ENCODE measurements at regions of chr2 and their contacts with region 1.

Region 1: GRCh38 chr2:131366643-131367042 is 2.7 kb upstream of the RAB6D start:
- DNase-seq: no peak
- ATAC-seq: no peak
- H3K4me3 ChIP-seq: no peak overlapping the region
- H3K27ac ChIP-seq: no peak overlapping the region
- H3K4me1 ChIP-seq: no peaks in the 10 kb centered on the region
- H3K27me3 ChIP-seq: peaks cover 6% of the 10 kb centered on the region
- CTCF ChIP-seq: no peak
- POLR2A ChIP-seq: no peak
- RAD21 ChIP-seq: no peak

Region 2: GRCh38 chr2:130288461-130289403 is 1077.9 kb before region 1 on chr2:
- CTCF ChIA-PET with region 1: no interaction called
- POLR2A ChIA-PET with region 1: no interaction called
- dilution Hi-C with region 1: loop called (anchors 25 kb)
- in situ Hi-C with region 1: no loop called
- intact Hi-C with region 1: no loop called
- DNase-seq: no peak
- ATAC-seq: no peak
- H3K4me3 ChIP-seq: no peak overlapping the region
- H3K27ac ChIP-seq: no peak overlapping the region
- H3K4me1 ChIP-seq: no peaks in the 10 kb centered on the region
- H3K27me3 ChIP-seq: no peaks in the 10 kb centered on the region
- CTCF ChIP-seq: no peak
- POLR2A ChIP-seq: no peak
- RAD21 ChIP-seq: no peak

Region 3: GRCh38 chr2:131055169-131056065 is 311.2 kb before region 1 on chr2:
- CTCF ChIA-PET with region 1: no interaction called
- POLR2A ChIA-PET with region 1: no interaction called
- dilution Hi-C with region 1: no loop called
- in situ Hi-C with region 1: no loop called
- intact Hi-C with region 1: no loop called
- DNase-seq: peak; percentile 75
- ATAC-seq: peak; percentile 85
- H3K4me3 ChIP-seq: no peak overlapping the region
- H3K27ac ChIP-seq: peak overlapping the region; percentile 75
- H3K4me1 ChIP-seq: peaks cover 19% of the 10 kb centered on the region
- H3K27me3 ChIP-seq: no peaks in the 10 kb centered on the region
- CTCF ChIP-seq: no peak
- POLR2A ChIP-seq: no peak
- RAD21 ChIP-seq: no peak

Region 4: GRCh38 chr2:131557558-131558321 is 191.1 kb after region 1 on chr2:
- CTCF ChIA-PET with region 1: no interaction called
- POLR2A ChIA-PET with region 1: interaction called, 11 read pairs
- dilution Hi-C with region 1: no loop called
- in situ Hi-C with region 1: no loop called
- intact Hi-C with region 1: no loop called
- DNase-seq: no peak
- ATAC-seq: no peak
- H3K4me3 ChIP-seq: no peak overlapping the region
- H3K27ac ChIP-seq: no peak overlapping the region
- H3K4me1 ChIP-seq: no peaks in the 10 kb centered on the region
- H3K27me3 ChIP-seq: peaks cover 5% of the 10 kb centered on the region
- CTCF ChIP-seq: no peak
- POLR2A ChIP-seq: no peak
- RAD21 ChIP-seq: no peak

Region 5: DNA sequence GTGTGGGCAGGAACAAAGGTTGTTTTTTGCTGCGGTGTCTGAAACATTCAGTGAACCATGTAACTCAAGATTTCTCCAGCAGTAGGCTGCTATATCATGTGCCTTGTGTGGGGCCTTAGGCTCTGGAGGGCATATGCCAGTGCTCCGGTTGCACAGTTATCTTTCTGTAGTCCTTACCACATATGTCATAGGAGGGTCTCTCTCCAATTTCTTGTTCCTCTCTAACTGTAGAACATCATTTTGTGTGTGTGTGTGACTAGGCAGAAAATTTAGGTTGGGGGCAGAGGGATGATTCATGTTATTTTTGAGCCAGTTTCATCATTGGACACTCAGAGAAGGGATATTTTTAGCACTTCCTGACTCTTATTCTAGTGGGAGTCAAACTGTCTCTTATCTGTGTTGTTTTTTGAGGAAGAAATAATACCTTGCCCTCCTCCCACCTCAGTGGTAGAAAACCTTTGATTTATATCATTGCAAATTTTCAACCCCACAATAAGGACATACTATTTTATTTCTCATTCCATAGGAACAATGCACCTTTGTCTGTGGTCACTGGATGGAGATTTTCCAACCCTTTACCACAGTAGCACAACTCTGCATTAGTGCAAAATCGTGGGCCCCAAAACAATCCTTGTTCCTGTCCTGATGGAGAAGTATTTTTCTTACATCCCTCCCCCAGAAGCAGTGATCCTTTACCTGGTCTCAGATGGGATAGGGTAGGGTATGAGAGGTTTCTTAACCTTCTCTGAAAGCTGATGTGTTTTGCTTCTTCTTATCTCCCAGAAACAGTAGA is 275.0 kb after region 1 on chr2:
- CTCF ChIA-PET with region 1: no interaction called
- POLR2A ChIA-PET with region 1: no interaction called
- dilution Hi-C with region 1: no loop called
- in situ Hi-C with region 1: no loop called
- intact Hi-C with region 1: no loop called
- DNase-seq: peak; percentile 53
- ATAC-seq: 0 out of 2 replicates have a peak, but pooled peaks have one; percentile 32
- H3K4me3 ChIP-seq: no peak overlapping the region
- H3K27ac ChIP-seq: peak overlapping the region; percentile 44; the same call in 1 of the 2 replicates
- H3K4me1 ChIP-seq: peaks cover 5% of the 10 kb centered on the region
- H3K27me3 ChIP-seq: peaks cover under 1% of the 10 kb centered on the region; the same call in 1 of the 2 replicates
- CTCF ChIP-seq: no peak
- POLR2A ChIP-seq: no peak
- RAD21 ChIP-seq: no peak

Region 6: GRCh38 chr2:132256251-132256902 is 889.7 kb after region 1 on chr2:
- CTCF ChIA-PET with region 1: no interaction called
- POLR2A ChIA-PET with region 1: no interaction called
- dilution Hi-C with region 1: no loop called
- in situ Hi-C with region 1: no loop called
- intact Hi-C with region 1: no loop called
- DNase-seq: no peak
- ATAC-seq: no peak
- H3K4me3 ChIP-seq: no peak overlapping the region
- H3K27ac ChIP-seq: no peak overlapping the region
- H3K4me1 ChIP-seq: no peaks in the 10 kb centered on the region
- H3K27me3 ChIP-seq: peaks cover 9% of the 10 kb centered on the region; the same call in 1 of the 2 replicates
- CTCF ChIP-seq: no peak
- POLR2A ChIP-seq: no peak
- RAD21 ChIP-seq: no peak

Measured in IMR-90 (cell line).